ENCODE measurements at regions of chr16 and their contacts with region 1.

Region 1: GRCh38 chr16:81940781-81941560 is 70.3 kb downstream of the SDR42E1 start:
- DNase-seq: peak; percentile 2
- H3K4me3 ChIP-seq: no peak overlapping the region
- H3K27ac ChIP-seq: no peak overlapping the region
- H3K27me3 ChIP-seq: no peaks in the 10 kb centered on the region
- CTCF ChIP-seq: peak; percentile 51

Region 2: GRCh38 chr16:82220329-82220940 is 279.5 kb after region 1 on chr16:
- CTCF ChIA-PET with region 1: interaction called, 13 read pairs
- POLR2A ChIA-PET with region 1: no interaction called
- DNase-seq: no peak
- H3K4me3 ChIP-seq: no peak overlapping the region
- H3K27ac ChIP-seq: no peak overlapping the region
- H3K27me3 ChIP-seq: peaks cover 8% of the 10 kb centered on the region
- CTCF ChIP-seq: no peak

Region 3: GRCh38 chr16:82456683-82457082 is 515.7 kb after region 1 on chr16:
- CTCF ChIA-PET with region 1: interaction called, 10 read pairs
- POLR2A ChIA-PET with region 1: no interaction called
- DNase-seq: no peak
- H3K4me3 ChIP-seq: no peak overlapping the region
- H3K27ac ChIP-seq: no peak overlapping the region
- H3K27me3 ChIP-seq: no peaks in the 10 kb centered on the region
- CTCF ChIP-seq: peak; percentile 72